GM12878 (cell line): ENCODE measurements at regions of chr4 and their contacts with region 1.

Region 1: GRCh38 chr4:61896634-61897033 is 696.5 kb downstream of the ADGRL3 start:
- DNase-seq: no peak
- ATAC-seq: no peak
- H3K4me3 ChIP-seq: no peak overlapping the region
- H3K27ac ChIP-seq: no peak overlapping the region
- H3K4me1 ChIP-seq: no peaks in the 10 kb centered on the region
- H3K27me3 ChIP-seq: no peaks in the 10 kb centered on the region
- CTCF ChIP-seq: no peak
- EP300 ChIP-seq: no peak
- POLR2A ChIP-seq: no peak
- RAD21 ChIP-seq: no peak

Region 2: DNA sequence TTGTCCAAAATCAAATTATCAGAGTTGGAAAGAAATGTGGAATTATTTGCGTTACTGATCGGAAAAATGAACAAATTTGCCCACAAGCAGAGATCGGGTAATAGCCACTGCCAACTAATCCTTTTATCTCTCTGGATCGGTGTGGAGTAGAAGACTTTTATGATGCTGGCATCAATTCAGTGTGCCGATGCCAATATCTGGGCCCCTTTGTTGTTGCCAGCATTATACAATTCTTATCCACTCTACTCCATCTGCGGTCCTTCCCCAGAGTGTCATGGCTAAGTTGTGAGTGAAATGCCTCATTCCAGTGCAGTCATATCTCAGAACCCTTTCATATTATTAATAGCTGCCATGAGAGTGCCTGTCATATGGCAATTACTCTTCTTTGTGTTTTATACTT is 36.3 kb before region 1 on chr4:
- CTCF ChIA-PET with region 1: interaction called, 7 read pairs
- POLR2A ChIA-PET with region 1: interaction called, 13 read pairs
- RAD21 ChIA-PET with region 1: interaction called, 5 read pairs
- SMC1A ChIA-PET with region 1: interaction called, 13 read pairs
- in situ Hi-C with region 1: no loop called
- intact Hi-C with region 1: no loop called
- DNase-seq: no peak
- ATAC-seq: no peak
- H3K4me3 ChIP-seq: no peak overlapping the region
- H3K27ac ChIP-seq: no peak overlapping the region
- H3K4me1 ChIP-seq: no peaks in the 10 kb centered on the region
- H3K27me3 ChIP-seq: no peaks in the 10 kb centered on the region
- CTCF ChIP-seq: no peak
- EP300 ChIP-seq: no peak
- POLR2A ChIP-seq: no peak
- RAD21 ChIP-seq: no peak

Region 3: DNA sequence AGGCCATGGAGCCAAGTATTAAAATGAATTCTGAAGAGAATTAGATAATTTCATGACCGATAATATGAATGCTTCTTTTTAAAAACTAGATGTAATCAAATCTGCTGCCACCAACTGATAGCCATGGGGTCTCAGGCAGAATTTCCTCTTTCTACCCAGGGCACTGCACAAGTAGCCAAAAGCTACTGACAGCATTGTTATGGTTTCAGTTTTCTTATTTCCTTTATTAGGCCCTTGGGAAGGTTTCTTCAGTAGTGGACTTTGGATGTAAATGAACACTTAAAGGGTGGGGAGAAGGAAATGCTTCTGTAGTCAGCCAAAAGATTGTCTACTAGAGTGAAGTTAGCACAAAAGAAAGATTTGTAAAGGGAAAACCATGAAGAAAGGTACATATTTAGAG is 10.5 kb before region 1 on chr4:
- CTCF ChIA-PET with region 1: interaction called, 4 read pairs
- POLR2A ChIA-PET with region 1: interaction called, 3 read pairs
- RAD21 ChIA-PET with region 1: no interaction called
- SMC1A ChIA-PET with region 1: interaction called, 51 read pairs
- in situ Hi-C with region 1: no loop called
- intact Hi-C with region 1: no loop called
- DNase-seq: no peak
- ATAC-seq: no peak
- H3K4me3 ChIP-seq: no peak overlapping the region
- H3K27ac ChIP-seq: no peak overlapping the region
- H3K4me1 ChIP-seq: no peaks in the 10 kb centered on the region
- H3K27me3 ChIP-seq: no peaks in the 10 kb centered on the region
- CTCF ChIP-seq: no peak
- EP300 ChIP-seq: no peak
- POLR2A ChIP-seq: no peak
- RAD21 ChIP-seq: no peak

Region 4: GRCh38 chr4:61924131-61924530 is 27.5 kb after region 1 on chr4:
- CTCF ChIA-PET with region 1: no interaction called
- POLR2A ChIA-PET with region 1: no interaction called
- RAD21 ChIA-PET with region 1: interaction called, 4 read pairs
- SMC1A ChIA-PET with region 1: interaction called, 22 read pairs
- in situ Hi-C with region 1: no loop called
- intact Hi-C with region 1: no loop called
- DNase-seq: no peak
- ATAC-seq: 0 out of 3 replicates have a peak, but pooled peaks have one; percentile 33
- H3K4me3 ChIP-seq: no peak overlapping the region
- H3K27ac ChIP-seq: no peak overlapping the region
- H3K4me1 ChIP-seq: no peaks in the 10 kb centered on the region
- H3K27me3 ChIP-seq: no peaks in the 10 kb centered on the region
- CTCF ChIP-seq: no peak; a peak in 1 of 6 replicates
- EP300 ChIP-seq: no peak
- POLR2A ChIP-seq: no peak
- RAD21 ChIP-seq: no peak

Region 5: GRCh38 chr4:61958591-61958990 is 62.0 kb after region 1 on chr4:
- CTCF ChIA-PET with region 1: no interaction called
- POLR2A ChIA-PET with region 1: no interaction called
- RAD21 ChIA-PET with region 1: no interaction called
- SMC1A ChIA-PET with region 1: no interaction called
- in situ Hi-C with region 1: no loop called
- intact Hi-C with region 1: no loop called
- DNase-seq: no peak
- ATAC-seq: no peak
- H3K4me3 ChIP-seq: no peak overlapping the region
- H3K27ac ChIP-seq: no peak overlapping the region
- H3K4me1 ChIP-seq: no peaks in the 10 kb centered on the region
- H3K27me3 ChIP-seq: no peaks in the 10 kb centered on the region
- CTCF ChIP-seq: no peak
- EP300 ChIP-seq: no peak
- POLR2A ChIP-seq: no peak
- RAD21 ChIP-seq: no peak